ENCODE measurements at regions of chr11 and their contacts with region 1.

Region 1: DNA sequence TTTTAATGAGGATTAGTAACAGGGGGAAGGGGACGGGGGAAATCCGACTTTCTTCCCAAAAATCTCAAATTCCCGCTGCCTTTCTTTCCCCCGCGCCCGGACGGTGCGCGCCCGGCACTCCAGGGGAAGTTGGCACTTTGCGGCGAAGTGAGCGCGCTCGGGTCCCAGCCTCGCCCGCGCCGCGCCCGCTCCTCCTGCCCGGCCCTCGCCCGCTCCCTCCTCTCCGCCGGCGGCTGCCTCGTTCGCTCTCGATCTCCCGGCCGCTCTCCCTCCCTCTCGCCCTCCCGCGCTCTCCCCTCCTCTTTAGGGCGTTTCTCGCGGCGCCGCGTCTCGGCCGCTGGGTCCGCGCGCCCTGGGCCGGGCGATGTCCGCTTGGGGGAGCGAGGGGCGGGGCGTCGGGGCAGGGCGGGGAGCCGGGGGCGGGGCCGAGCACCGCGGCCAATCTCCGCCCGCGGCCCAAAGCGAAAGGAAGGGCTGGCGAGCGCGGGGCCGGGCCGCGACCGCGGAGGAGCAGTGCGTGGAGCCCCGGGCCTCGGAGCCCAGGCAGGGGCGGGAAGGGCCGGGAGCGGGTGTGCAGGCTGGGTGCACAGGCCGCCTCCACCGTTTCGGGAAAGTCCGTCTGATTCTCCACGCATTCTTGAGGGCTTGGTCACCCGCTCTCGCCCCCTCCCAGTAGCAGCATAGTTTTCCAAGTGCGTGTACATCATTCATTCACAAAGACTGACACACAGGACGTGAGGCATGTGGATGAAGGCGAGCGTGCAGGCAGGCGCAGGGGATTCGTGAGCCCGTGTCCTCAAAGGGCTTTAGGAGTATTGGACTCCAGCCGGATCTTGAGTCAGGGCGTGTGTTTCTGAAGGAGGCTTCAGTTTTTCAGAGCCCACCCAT is 65.1 kb downstream of the ETS1 start:
- DNase-seq: peak; percentile 93 to 94
- H3K4me3 ChIP-seq: peak overlapping the region; percentile 91
- H3K27ac ChIP-seq: peak overlapping the region; percentile 89
- H3K4me1 ChIP-seq: peaks cover 75% of the 10 kb centered on the region
- H3K27me3 ChIP-seq: no peaks in the 10 kb centered on the region
- CTCF ChIP-seq: no peak

Region 2: DNA sequence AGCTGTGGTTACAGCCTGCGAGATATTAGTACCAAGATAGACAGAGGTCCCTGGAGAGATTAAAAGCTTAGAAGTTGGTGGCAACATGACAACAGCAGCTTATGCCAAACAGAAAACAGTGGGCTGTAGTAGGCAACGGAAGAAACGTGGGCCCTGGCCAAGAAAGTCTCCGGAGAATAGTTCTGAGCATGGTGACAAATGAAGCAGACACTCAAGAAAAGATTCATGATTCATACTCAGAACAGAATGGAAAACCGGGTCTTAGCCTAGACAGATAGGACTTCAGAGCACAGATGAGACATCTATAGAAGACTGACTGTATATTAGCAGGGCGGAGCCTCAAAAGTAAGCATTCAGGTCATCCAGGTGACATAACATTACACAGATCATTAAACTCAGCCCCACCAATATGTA is 662.4 kb before region 1 on chr11:
- CTCF ChIA-PET with region 1: no interaction called
- POLR2A ChIA-PET with region 1: no interaction called
- intact Hi-C with region 1: loop called (anchors 5 kb)
- DNase-seq: peak in 1 of 2 experiments; percentile 62
- H3K4me3 ChIP-seq: no peak overlapping the region
- H3K27ac ChIP-seq: no peak overlapping the region
- H3K4me1 ChIP-seq: no peaks in the 10 kb centered on the region
- H3K27me3 ChIP-seq: no peaks in the 10 kb centered on the region
- CTCF ChIP-seq: no peak

Region 3: GRCh38 chr11:128290106-128290840 is 232.0 kb before region 1 on chr11:
- CTCF ChIA-PET with region 1: no interaction called
- POLR2A ChIA-PET with region 1: no interaction called
- intact Hi-C with region 1: loop called (anchors 5 kb)
- DNase-seq: peak; percentile 45 to 58
- H3K4me3 ChIP-seq: no peak overlapping the region
- H3K27ac ChIP-seq: no peak overlapping the region
- H3K4me1 ChIP-seq: peaks cover 18% of the 10 kb centered on the region
- H3K27me3 ChIP-seq: no peaks in the 10 kb centered on the region
- CTCF ChIP-seq: peak; percentile 93

Region 4: GRCh38 chr11:128467610-128468041 is 54.7 kb before region 1 on chr11:
- CTCF ChIA-PET with region 1: no interaction called
- POLR2A ChIA-PET with region 1: no interaction called
- intact Hi-C with region 1: loop called (anchors 1 kb)
- DNase-seq: peak; percentile 69 to 87
- H3K4me3 ChIP-seq: no peak overlapping the region
- H3K27ac ChIP-seq: peak overlapping the region; percentile 62
- H3K4me1 ChIP-seq: peaks cover 18% of the 10 kb centered on the region
- H3K27me3 ChIP-seq: no peaks in the 10 kb centered on the region
- CTCF ChIP-seq: no peak

Region 5: DNA sequence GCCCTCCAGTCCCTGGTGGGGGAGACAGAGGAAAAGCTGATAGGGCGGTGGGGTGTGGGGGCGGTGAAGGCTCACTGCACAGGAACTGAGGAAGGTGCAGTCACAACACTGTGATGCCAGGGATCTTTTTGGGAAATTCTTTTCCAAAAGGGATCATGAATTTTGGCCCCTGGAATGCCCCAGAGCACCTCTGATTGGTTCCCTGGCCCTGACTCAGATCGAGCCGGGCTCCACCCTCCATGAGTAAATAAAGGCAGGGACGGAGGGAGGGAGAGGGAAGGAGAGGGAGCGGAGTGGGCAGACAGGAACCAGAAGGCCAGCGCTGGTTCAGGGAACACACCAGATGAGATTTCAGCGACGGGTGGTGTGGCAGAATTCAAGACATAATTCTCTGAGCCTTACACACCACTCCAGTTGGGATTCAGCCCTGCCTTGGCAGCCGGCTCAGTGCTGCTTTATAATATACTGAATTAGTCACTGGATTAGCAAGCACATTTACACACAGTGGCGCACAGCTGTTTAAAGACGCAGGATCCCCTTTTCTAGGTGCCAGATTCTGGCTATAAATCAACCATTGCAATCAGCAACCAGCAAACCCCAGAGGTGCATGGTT is 15.2 kb before region 1 on chr11:
- CTCF ChIA-PET with region 1: no interaction called
- POLR2A ChIA-PET with region 1: interaction called, 8 read pairs
- intact Hi-C with region 1: loop called (anchors 1 kb)
- DNase-seq: peak; percentile 80 to 81
- H3K4me3 ChIP-seq: peak overlapping the region; percentile 46; the same call in 1 of the 2 replicates
- H3K27ac ChIP-seq: peak overlapping the region; percentile 85
- H3K4me1 ChIP-seq: peaks cover 62% of the 10 kb centered on the region
- H3K27me3 ChIP-seq: no peaks in the 10 kb centered on the region
- CTCF ChIP-seq: no peak

Region 6: GRCh38 chr11:128582496-128583366 is 60.4 kb after region 1 on chr11:
- CTCF ChIA-PET with region 1: no interaction called
- POLR2A ChIA-PET with region 1: no interaction called
- intact Hi-C with region 1: loop called (anchors 2 kb)
- DNase-seq: peak; percentile 71 to 89
- H3K4me3 ChIP-seq: peak overlapping the region; percentile 28; the same call in 1 of the 2 replicates
- H3K27ac ChIP-seq: peak overlapping the region; percentile 52
- H3K4me1 ChIP-seq: peaks cover 20% of the 10 kb centered on the region
- H3K27me3 ChIP-seq: no peaks in the 10 kb centered on the region
- CTCF ChIP-seq: no peak

Region 7: GRCh38 chr11:128630367-128631230 is 108.3 kb after region 1 on chr11:
- CTCF ChIA-PET with region 1: no interaction called
- POLR2A ChIA-PET with region 1: interaction called, 3 read pairs
- intact Hi-C with region 1: loop called (anchors 2 kb)
- DNase-seq: peak; percentile 60 to 73
- H3K4me3 ChIP-seq: no peak overlapping the region
- H3K27ac ChIP-seq: no peak overlapping the region
- H3K4me1 ChIP-seq: peaks cover 9% of the 10 kb centered on the region
- H3K27me3 ChIP-seq: no peaks in the 10 kb centered on the region
- CTCF ChIP-seq: peak; percentile 93